Endothelial cell of umbilical vein (primary cell): ENCODE measurements at regions of chr9 and their contacts with region 1.

Region 1: GRCh38 chr9:137200311-137201204 is at the start of gene TPRN:
- DNase-seq: peak; percentile 98
- H3K4me3 ChIP-seq: peak within 1 kb of the TSS in 2 of 3 experiments; percentile 27 to 80
- H3K27ac ChIP-seq: no peak within 1 kb of the TSS
- H3K4me1 ChIP-seq: peaks cover 21% of the 10 kb centered on the region
- H3K27me3 ChIP-seq: no peaks in the 10 kb centered on the region
- CTCF ChIP-seq: no peak
- POLR2A ChIP-seq: peak; percentile 98
- total RNA-seq, gene TPRN: 12.1 and 12.4 TPM in 2 replicates

Region 2: DNA sequence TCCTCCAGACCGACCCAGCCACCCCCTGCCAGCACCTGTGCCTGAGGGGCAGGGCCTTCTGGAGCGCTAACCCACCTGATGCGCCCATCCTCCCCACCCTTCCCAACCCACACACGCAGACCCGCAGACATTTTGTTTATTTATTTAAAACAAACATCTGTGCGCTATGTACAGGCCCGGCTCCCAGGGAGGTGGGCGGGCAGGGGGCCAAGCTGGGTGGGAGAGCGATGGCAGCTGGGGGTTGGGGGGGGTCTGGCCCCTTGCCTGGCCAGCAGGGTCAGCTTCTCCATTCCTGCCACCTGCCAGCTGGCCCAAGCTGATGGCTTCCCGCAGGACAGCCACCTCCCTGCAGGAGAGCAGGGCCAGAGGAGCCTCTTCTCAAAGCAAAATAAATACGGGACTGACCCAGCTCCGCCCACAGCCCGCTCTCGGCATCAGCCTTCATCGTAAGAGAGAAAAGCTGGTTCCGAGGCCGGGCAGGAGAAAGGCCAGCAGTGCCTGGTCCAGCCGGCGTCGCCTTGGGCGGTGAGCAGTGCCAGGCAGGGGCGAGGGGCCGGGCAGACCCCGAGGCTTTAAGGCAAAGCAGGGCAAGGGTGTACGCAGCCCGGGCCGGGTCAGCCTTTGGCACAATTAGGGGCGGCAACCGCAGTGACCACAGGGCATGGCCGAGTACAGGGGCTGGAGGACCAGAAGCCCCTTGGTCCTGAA is 193.3 kb before region 1 on chr9:
- CTCF ChIA-PET with region 1: no interaction called
- POLR2A ChIA-PET with region 1: no interaction called
- dilution Hi-C with region 1: no loop called
- intact Hi-C with region 1: no loop called
- DNase-seq: no peak
- H3K4me3 ChIP-seq: no peak overlapping the region
- H3K27ac ChIP-seq: no peak overlapping the region
- H3K4me1 ChIP-seq: no peaks in the 10 kb centered on the region
- H3K27me3 ChIP-seq: no peaks in the 10 kb centered on the region
- CTCF ChIP-seq: no peak
- POLR2A ChIP-seq: no peak

Region 3: DNA sequence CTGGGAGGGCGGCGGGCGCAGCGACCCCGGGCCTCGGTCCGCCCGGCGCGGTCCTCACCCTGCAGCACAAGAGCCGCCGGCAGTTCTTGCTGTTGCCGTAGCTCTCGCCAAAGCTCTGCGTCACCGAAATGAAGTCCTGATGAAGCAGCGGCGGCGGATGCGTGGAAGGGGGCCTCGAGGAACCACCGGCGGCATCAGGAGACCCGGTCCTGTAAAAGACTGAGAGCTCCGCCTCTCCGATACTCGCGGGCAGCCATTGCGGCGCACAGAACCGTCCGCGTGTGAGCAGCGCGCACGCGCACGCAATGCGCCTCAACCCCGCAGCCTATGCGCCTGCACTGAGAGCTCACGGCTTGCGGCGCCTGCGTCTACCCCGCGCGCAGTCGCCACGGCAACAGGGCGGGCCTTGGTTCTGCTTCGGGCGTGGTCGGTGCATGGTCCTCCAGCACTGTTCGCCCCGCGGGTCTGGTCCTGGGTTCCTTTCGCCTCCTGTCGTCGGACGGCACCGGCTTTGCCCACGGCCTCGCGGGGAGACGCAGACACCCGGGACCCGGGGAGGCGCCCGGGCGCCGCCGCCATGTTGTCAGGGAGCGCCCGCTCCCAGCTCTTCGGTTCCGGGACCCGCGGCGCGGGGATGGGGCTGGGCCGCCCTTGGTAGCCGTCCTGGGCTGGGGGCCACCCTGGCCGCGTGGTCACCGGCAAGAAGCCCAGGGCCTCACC is 70.9 kb before region 1 on chr9:
- CTCF ChIA-PET with region 1: interaction called, 3 read pairs
- POLR2A ChIA-PET with region 1: interaction called, 7 read pairs
- dilution Hi-C with region 1: no loop called
- intact Hi-C with region 1: loop called (anchors 1 kb)
- DNase-seq: peak; percentile 92
- H3K4me3 ChIP-seq: peak overlapping the region; percentile 39 to 63 (median 51)
- H3K27ac ChIP-seq: peak overlapping the region; percentile 40
- H3K4me1 ChIP-seq: peaks cover 26% of the 10 kb centered on the region
- H3K27me3 ChIP-seq: no peaks in the 10 kb centered on the region
- CTCF ChIP-seq: no peak
- POLR2A ChIP-seq: peak; percentile 94

Region 4: GRCh38 chr9:137140151-137141012 is 60.2 kb before region 1 on chr9:
- CTCF ChIA-PET with region 1: no interaction called
- POLR2A ChIA-PET with region 1: no interaction called
- dilution Hi-C with region 1: no loop called
- intact Hi-C with region 1: no loop called
- DNase-seq: no peak
- H3K4me3 ChIP-seq: no peak overlapping the region
- H3K27ac ChIP-seq: no peak overlapping the region
- H3K4me1 ChIP-seq: no peaks in the 10 kb centered on the region
- H3K27me3 ChIP-seq: peaks cover 35 to 36% of the 10 kb centered on the region in 2 experiments
- CTCF ChIP-seq: no peak
- POLR2A ChIP-seq: no peak

Region 5: GRCh38 chr9:137188490-137189296 is 11.9 kb before region 1 on chr9 and contains the starts of genes ANAPC2 and SSNA1:
- CTCF ChIA-PET with region 1: interaction called, 7 read pairs
- POLR2A ChIA-PET with region 1: interaction called, 6 read pairs
- dilution Hi-C with region 1: no loop called
- intact Hi-C with region 1: loop called (anchors 1 kb)
- DNase-seq: peak; percentile 95
- H3K4me3 ChIP-seq: peak within 1 kb of the TSS; percentile 57 to 86 (median 64)
- H3K27ac ChIP-seq: peak within 1 kb of the TSS; percentile 48
- H3K4me1 ChIP-seq: peaks cover 17% of the 10 kb centered on the region
- H3K27me3 ChIP-seq: no peaks in the 10 kb centered on the region
- CTCF ChIP-seq: peak; percentile 32 to 40
- POLR2A ChIP-seq: peak; percentile 80
- total RNA-seq, gene ANAPC2: 69.2 and 70.0 TPM in 2 replicates
- total RNA-seq, gene SSNA1: 89.0 and 90.5 TPM in 2 replicates

Region 6: DNA sequence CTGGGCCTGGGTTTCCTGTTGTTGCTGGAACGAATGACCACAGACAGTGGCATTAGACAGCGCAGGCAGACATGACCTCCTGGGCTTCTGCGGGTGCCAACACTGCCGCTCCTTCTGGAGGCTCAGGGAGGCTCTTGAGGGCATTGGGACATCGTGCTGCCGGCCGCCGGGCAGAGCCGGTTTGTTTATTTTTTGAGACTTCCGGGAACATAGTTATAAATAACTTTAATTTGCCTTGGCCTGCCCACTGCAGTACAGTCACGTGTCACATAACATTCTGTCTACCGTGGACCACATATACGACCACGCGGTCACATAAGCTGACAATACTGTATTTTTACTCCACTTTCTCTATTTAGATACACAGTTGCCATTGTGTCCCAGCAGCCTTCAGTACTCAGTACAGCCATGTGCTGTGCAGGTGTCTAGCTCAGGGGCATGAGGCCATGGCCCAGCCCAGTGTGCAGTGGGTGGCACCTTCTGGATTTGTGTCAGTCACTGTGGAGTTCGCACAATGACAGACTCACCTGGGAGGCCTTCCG is 68.7 kb after region 1 on chr9:
- CTCF ChIA-PET with region 1: no interaction called
- POLR2A ChIA-PET with region 1: no interaction called
- dilution Hi-C with region 1: no loop called
- intact Hi-C with region 1: loop called (anchors 2 kb)
- DNase-seq: peak; percentile 46
- H3K4me3 ChIP-seq: no peak overlapping the region
- H3K27ac ChIP-seq: peak overlapping the region; percentile 47
- H3K4me1 ChIP-seq: peaks cover 22% of the 10 kb centered on the region
- H3K27me3 ChIP-seq: no peaks in the 10 kb centered on the region
- CTCF ChIP-seq: no peak
- POLR2A ChIP-seq: no peak